ENCODE measurements at regions of chr12 and their contacts with region 1.

Region 1: DNA sequence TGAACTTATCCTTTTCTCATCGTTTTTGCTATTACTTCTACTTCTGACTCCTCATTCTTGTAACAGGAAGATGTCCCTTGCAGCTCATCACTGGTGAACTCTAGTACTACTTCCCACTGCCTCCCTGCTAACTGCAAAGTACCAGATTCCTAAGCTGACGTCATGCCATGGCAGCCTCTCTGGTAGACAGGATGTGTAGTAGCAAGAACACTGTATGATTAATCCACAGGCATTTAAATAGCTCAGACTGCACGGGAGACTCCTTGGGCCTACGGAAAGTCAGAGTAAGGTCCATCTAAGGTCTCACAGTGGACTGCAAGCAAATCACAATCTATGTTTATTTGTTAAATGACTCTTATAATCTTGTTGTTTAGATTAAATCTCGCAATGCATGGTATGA is 43.5 kb downstream of the DNAI7 start:
- DNase-seq: no peak
- ATAC-seq: no peak
- H3K4me3 ChIP-seq: no peak overlapping the region
- H3K4me3 Mint-ChIP-seq: no peak overlapping the region
- H3K27ac ChIP-seq: no peak overlapping the region
- H3K27ac Mint-ChIP-seq: no peak overlapping the region
- H3K4me1 ChIP-seq: peaks cover 18 to 21% of the 10 kb centered on the region in 2 donors
- H3K4me1 Mint-ChIP-seq: peaks cover 18% of the 10 kb centered on the region
- H3K27me3 ChIP-seq: no peaks in the 10 kb centered on the region
- H3K27me3 Mint-ChIP-seq: no peaks in the 10 kb centered on the region
- CTCF ChIP-seq: no peak

Region 2: GRCh38 chr12:24991209-24992049 is 160.0 kb before region 1 on chr12:
- CTCF ChIA-PET with region 1: interaction called, 55 read pairs
- POLR2A ChIA-PET with region 1: interaction called, 3 read pairs
- intact Hi-C with region 1: loop called (anchors 1 kb)
- DNase-seq: peak; percentile 82
- ATAC-seq: peak; percentile 74
- H3K4me3 ChIP-seq: no peak overlapping the region
- H3K4me3 Mint-ChIP-seq: no peak overlapping the region
- H3K27ac ChIP-seq: no peak overlapping the region
- H3K27ac Mint-ChIP-seq: no peak overlapping the region
- H3K4me1 ChIP-seq: peaks cover 28 to 37% of the 10 kb centered on the region in 2 donors
- H3K4me1 Mint-ChIP-seq: peaks cover 35% of the 10 kb centered on the region
- H3K27me3 ChIP-seq: no peaks in the 10 kb centered on the region
- H3K27me3 Mint-ChIP-seq: no peaks in the 10 kb centered on the region
- CTCF ChIP-seq: peak; percentile 82

Region 3: DNA sequence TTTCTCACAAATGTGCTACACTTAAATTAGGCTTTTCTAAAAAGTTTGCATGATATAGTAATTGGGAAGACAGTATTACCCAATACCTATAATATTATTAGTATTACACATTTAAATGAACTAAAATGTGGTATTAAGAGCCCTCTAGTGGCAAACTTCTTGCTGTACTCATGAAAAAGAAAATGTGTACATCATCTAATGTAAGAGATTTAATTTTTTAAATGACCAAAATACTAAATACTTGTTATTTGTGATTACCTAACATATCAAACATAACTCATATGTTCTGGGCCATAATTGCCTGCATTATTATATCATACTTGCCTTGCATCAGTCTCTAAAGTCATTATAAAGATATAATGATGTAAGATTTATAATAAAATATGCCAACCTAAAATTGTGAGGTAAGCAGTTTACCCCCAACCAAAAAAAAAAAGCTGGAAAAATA is 20.7 kb before region 1 on chr12:
- CTCF ChIA-PET with region 1: interaction called, 56 read pairs
- POLR2A ChIA-PET with region 1: no interaction called
- intact Hi-C with region 1: loop called (anchors 1 kb)
- DNase-seq: peak; percentile 63
- ATAC-seq: peak; percentile 43
- H3K4me3 ChIP-seq: no peak overlapping the region
- H3K4me3 Mint-ChIP-seq: no peak overlapping the region
- H3K27ac ChIP-seq: no peak overlapping the region
- H3K27ac Mint-ChIP-seq: no peak overlapping the region
- H3K4me1 ChIP-seq: peaks cover 6 to 7% of the 10 kb centered on the region in 2 donors
- H3K4me1 Mint-ChIP-seq: peaks cover 10% of the 10 kb centered on the region
- H3K27me3 ChIP-seq: no peaks in the 10 kb centered on the region
- H3K27me3 Mint-ChIP-seq: no peaks in the 10 kb centered on the region
- CTCF ChIP-seq: peak; percentile 85

Region 4: DNA sequence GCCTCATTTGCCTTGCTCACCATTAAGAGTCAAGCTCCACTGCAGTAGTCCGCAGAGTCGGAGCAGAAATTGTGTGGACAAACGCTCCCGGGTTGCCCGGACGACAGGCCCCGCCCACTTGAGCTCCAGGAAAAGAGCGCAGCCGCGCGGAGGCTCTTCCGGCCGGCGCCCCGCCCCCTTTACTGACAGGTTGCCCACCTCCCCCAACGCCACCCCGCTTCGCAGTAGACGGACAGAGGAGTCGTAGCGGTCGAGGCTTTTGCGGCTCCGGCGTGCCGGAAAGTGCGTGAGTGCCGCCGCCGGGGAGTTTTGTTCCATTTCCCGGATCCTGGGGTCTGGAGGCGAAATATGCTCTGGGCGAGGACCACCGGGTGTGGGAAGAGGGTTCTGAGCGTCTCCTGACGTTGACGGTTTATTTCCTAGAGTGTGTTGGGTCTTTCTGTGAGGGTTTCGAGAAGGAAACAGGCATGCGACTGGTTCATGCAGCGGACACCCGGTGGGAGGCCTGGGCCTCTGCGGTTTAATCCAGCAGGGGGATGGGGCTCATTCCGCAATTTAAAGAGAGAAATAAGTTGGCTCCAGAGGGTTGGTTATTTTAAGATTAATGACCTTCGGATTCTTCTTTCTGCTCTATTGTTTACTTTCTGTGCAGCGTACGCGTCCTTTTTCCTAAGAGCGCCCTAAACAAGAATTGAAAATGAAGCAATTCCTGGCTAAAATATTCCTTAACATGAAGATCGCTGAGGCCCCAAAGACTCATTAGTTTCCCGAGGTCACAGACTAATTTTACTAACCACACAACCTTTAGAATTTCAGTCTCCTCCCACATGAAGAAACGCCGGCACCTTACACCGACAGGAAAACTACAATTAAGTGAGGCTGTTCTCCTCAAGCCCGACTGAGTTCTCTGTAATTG is 43.8 kb after region 1 on chr12 and contains the starts of genes DNAI7 and ETFRF1:
- CTCF ChIA-PET with region 1: interaction called, 20 read pairs
- POLR2A ChIA-PET with region 1: interaction called, 5 read pairs
- intact Hi-C with region 1: loop called (anchors 1 kb)
- DNase-seq: peak; percentile 98
- ATAC-seq: peak; percentile 97
- H3K4me3 ChIP-seq: peak within 1 kb of the TSS; percentile 83 to 94 (median 93)
- H3K4me3 Mint-ChIP-seq: peak within 1 kb of the TSS; percentile 98
- H3K27ac ChIP-seq: peak within 1 kb of the TSS; percentile 92 to 95
- H3K27ac Mint-ChIP-seq: peak within 1 kb of the TSS; percentile 97
- H3K4me1 ChIP-seq: peaks cover 14 to 18% of the 10 kb centered on the region in 2 donors
- H3K4me1 Mint-ChIP-seq: peaks cover 40% of the 10 kb centered on the region
- H3K27me3 ChIP-seq: no peaks in the 10 kb centered on the region
- H3K27me3 Mint-ChIP-seq: no peaks in the 10 kb centered on the region
- CTCF ChIP-seq: no peak
- total RNA-seq, gene DNAI7: 0.39 and 0.62 TPM in 2 replicates
- total RNA-seq, gene ETFRF1: 26.1 and 26.9 TPM in 2 replicates

Region 5: GRCh38 chr12:25250744-25251730 is 99.6 kb after region 1 on chr12 and contains the start of gene KRAS:
- CTCF ChIA-PET with region 1: no interaction called
- POLR2A ChIA-PET with region 1: no interaction called
- intact Hi-C with region 1: loop called (anchors 2 kb)
- DNase-seq: peak; percentile 96
- ATAC-seq: peak; percentile 80
- H3K4me3 ChIP-seq: peak within 1 kb of the TSS; percentile 59 to 94 (median 74)
- H3K4me3 Mint-ChIP-seq: peak within 1 kb of the TSS; percentile 96
- H3K27ac ChIP-seq: peak within 1 kb of the TSS; percentile 61 to 89
- H3K27ac Mint-ChIP-seq: peak within 1 kb of the TSS; percentile 99
- H3K4me1 ChIP-seq: peaks cover 25 to 42% of the 10 kb centered on the region in 2 donors
- H3K4me1 Mint-ChIP-seq: peaks cover 48% of the 10 kb centered on the region
- H3K27me3 ChIP-seq: no peaks in the 10 kb centered on the region
- H3K27me3 Mint-ChIP-seq: no peaks in the 10 kb centered on the region
- CTCF ChIP-seq: no peak
- total RNA-seq, gene KRAS: 40.7 and 41.8 TPM in 2 replicates

Region 6: DNA sequence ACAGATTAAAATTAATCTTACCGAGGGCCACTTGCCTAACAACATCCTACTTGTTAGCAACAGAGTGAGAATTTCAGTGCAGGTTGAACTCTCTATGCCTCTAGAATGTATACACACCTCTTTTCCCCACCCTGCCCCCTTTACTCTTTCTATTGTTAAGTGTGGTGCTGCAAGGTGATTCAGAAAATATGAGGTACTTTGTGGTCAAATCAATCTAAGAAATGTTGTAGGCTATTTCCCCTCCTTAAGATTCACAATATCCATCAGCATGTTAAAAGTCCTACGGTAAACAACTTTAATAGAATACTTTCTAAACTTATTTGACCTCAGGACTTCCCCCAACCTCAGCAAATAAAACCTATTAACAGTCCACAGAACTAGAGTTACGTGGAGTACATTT is 295.6 kb after region 1 on chr12:
- CTCF ChIA-PET with region 1: no interaction called
- POLR2A ChIA-PET with region 1: no interaction called
- intact Hi-C with region 1: no loop called
- DNase-seq: no peak
- ATAC-seq: no peak
- H3K4me3 ChIP-seq: no peak overlapping the region
- H3K4me3 Mint-ChIP-seq: no peak overlapping the region
- H3K27ac ChIP-seq: no peak overlapping the region
- H3K27ac Mint-ChIP-seq: no peak overlapping the region
- H3K4me1 ChIP-seq: no peaks in the 10 kb centered on the region
- H3K4me1 Mint-ChIP-seq: no peaks in the 10 kb centered on the region
- H3K27me3 ChIP-seq: peaks cover 0 to 3% (median 0%) of the 10 kb centered on the region in 4 experiments
- H3K27me3 Mint-ChIP-seq: peaks cover 20% of the 10 kb centered on the region
- CTCF ChIP-seq: no peak

Measured in B cell (primary cell).